Posterior cingulate gyrus (tissue), 11 donors: ENCODE measurements at regions of chr18 and their contacts with region 1.

Region 1: DNA sequence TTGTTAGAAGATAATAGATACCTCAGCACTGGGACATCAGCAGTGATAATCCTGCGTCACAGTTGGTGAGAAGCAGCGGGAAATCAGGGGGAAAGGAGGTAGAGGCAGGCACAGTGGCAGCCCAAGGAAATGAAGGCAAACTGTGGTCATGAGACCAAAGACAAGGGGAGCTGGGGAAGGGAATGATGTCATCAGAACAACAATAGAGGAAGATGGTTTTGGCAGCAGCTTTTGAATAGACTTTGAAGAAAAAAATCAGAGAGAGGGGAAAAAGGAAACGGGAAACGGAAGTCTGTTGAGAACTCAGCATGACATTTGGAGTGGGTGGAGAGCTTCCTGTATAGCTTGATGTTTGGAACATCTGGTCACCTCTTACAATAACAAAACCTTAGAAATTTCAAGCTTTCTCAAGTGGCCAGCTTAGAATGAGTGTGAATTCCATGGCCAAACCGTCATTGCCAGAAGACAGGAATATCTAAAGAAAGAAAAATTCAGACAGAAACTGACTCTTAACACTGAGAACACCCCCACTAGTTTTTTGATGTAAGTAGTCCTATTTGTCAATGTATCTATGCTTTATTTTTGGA is 18.4 kb upstream of the YES1 start:
- DNase-seq: no peak

Region 2: DNA sequence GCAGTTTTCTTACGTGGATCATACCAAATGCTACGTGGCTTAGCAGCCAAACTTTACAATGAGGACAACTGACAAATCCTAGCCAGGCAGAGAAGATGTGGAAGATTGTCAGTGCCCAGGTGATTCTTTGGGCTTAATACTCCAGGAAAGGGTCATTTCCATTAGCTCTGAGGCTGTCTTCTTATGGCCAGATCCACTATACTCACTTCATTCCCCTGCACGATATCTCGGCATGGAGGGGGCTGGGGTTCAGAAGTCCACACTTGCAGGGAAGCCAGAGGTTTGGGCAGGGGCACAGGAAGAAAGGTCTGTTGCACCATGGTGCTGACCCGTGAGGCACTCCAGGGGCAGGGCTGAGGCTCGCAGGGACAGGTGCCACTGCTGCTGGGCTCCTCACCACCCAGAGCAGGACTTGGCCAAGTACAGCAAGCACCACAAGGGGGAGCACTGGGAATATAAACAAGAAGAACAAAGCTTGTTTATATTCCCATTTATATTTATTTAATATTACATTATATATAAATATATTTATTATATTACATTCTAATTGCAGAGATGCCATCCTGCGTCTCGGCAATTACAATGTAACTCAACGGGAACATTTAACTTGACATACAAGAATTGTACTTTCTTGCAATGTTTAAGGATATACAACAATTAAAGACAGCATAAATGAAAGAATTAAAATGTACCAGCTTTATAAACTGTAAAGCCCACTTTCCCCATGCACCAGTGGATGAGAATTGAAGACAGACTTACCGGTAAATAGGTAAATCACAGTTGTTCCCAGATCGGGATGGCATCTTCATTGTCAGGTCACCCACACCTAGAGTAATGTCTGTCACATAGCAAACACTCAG is 206.4 kb before region 1 on chr18:
- intact Hi-C with region 1: loop called (anchors 2 kb)
- DNase-seq: peak; percentile 34 to 92 (median 74)

Region 3: GRCh38 chr18:741931-742512 is 88.4 kb before region 1 on chr18:
- intact Hi-C with region 1: loop called (anchors 1 kb)
- DNase-seq: no peak

Region 4: DNA sequence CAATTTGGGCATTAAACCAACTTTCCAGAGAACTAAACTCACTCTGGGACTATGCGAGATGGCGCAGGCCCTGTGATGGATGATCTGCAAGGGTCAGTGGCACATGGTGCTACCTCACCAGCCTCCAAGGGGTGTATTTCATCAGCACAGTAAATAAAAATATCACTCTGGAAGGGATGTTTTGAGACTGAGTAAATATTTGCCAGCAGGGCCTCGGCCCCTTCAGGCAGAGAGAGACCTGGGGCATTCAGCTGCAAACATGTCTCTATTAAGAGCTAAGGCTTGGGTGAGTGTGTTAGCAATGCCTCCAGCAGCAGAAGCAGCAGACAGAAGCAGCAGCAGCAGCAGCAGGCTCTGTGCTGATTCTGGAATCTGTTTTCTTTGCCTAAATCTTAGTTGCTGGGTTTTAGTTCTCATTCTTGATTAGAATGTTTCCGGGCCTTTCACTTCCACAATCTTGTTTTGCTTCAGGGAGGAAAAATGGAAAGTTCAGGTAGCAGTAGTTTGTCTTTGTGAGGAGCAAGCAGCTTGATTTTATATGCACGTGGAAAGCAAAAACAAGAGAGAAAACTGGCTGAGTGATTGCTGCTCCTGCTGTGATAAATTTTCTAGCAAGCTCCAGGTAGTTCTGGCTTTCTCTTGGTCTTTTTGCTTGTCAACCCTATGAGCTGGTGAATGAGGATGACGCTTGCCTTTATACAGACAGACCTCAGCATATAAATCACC is 92.9 kb after region 1 on chr18:
- intact Hi-C with region 1: no loop called
- DNase-seq: no peak